Aorta (tissue), 5 donors: ENCODE measurements at regions of chr10 and their contacts with region 1.

Region 1: GRCh38 chr10:93702211-93703001 is at the start of gene FRA10AC1:
- DNase-seq: peak; percentile 94 to 97
- ATAC-seq: peak; percentile 99
- H3K4me3 ChIP-seq: peak within 1 kb of the TSS; percentile 50 to 94
- H3K27ac ChIP-seq: peak within 1 kb of the TSS; percentile 37 to 84
- H3K4me1 ChIP-seq: peaks cover 0 to 2% of the 10 kb centered on the region in 2 donors
- H3K27me3 ChIP-seq: no peaks in the 10 kb centered on the region
- total RNA-seq, gene FRA10AC1: 24.8 to 32.5 TPM

Region 2: DNA sequence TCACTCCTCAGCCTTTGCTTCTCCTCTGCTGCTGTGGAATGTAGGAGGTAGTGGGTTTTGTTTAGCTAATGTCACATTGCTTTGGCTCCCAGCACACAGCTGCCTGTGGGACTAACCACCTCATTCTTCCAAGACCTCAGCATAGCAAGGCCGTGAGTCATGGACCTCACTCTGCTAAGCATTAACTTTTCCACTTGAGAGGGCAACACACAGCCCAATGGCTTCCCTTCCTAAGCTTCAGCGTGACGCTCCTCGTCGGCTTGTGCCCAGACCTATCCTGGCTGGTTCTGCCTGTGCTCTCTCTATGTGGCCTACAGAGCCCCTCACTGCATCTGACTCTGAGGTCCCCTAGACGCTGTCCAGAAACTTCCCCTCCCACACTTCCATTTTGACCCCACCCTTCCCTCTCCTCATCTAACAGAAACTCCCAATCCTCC is 243.6 kb before region 1 on chr10:
- intact Hi-C with region 1: no loop called
- DNase-seq: peak; percentile 91 to 92
- ATAC-seq: peak; percentile 92
- H3K4me3 ChIP-seq: no peak overlapping the region
- H3K27ac ChIP-seq: peak overlapping the region; percentile 87 to 96
- H3K4me1 ChIP-seq: peaks cover 0 to 6% of the 10 kb centered on the region in 2 donors
- H3K27me3 ChIP-seq: no peaks in the 10 kb centered on the region

Region 3: DNA sequence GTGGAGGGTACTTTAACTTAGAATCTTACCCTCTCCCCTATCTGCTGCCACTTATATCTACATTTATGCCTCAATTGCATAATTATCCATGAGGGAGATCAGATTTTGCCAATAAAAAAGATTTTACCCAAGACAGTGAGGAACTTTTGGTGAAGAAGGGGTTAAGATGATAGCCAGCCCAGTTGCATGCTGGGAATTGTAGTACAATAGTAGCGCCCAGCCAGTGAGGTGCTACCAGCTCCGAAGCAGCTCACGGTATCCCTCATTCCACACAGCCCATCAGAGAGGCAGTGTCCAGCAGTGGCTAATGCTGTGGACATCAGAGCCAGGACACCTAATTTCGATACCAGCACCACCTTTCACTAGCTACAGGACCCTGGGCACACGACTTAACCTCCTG is 49.4 kb after region 1 on chr10:
- intact Hi-C with region 1: loop called (anchors 5 kb)
- DNase-seq: no peak
- ATAC-seq: no peak
- H3K4me3 ChIP-seq: no peak overlapping the region
- H3K27ac ChIP-seq: no peak overlapping the region
- H3K4me1 ChIP-seq: peaks cover 0 to 2% of the 10 kb centered on the region in 2 donors
- H3K27me3 ChIP-seq: no peaks in the 10 kb centered on the region

Region 4: DNA sequence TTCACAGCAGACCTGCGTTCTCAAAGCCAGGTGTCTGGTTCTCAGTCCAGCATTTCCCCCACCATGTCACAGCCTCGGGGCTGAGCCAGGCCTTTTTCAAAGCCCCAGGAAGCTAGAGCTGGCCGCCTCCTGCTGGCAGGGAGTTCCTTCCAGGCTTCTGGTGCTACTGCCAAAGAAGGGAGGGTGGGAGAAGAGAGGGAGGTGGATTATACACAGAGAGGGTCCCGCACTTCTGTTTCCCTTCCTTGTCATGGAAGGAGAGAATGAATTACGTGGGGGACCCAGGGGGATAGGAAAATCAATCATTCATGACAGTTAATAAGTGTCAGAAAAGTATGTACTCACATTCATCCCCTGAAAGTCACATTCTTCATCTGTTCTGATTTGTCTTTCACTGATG is 54.7 kb after region 1 on chr10:
- intact Hi-C with region 1: loop called (anchors 5 kb)
- DNase-seq: peak in 1 of 2 donors; percentile 51
- ATAC-seq: peak; percentile 62
- H3K4me3 ChIP-seq: peak overlapping the region; percentile 55 to 96
- H3K27ac ChIP-seq: no peak overlapping the region
- H3K4me1 ChIP-seq: peaks cover 4 to 5% of the 10 kb centered on the region in 2 donors
- H3K27me3 ChIP-seq: no peaks in the 10 kb centered on the region

Region 5: DNA sequence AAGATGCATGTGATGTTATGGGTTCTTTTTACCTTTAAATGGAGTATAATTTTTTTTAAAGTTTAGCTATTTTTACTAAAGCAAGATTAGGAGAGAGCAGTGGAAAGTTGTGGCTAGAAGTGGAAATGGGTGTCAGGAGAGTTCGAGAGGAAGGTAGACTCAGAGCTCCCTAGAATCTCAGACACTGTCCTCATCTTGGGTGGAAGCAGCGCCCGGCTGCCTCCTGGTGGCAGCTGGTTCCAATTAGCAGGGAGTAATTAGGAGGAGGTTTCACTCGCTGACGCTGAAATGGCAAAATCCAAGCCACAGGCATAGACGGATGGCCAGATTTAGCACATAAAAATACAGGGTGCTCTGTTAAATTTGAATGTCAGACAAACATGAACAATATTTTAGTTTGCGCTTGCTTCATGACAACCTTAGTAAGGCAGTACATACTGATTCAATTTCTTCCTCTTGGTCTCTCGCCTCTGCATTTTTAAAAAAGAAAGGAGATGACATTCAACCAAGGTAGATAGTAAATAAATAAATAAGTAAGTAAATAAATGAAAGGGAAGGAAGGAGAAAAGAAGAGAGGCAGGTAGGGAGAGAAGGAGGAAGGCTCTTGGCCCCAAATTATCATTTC is 113.8 kb after region 1 on chr10:
- intact Hi-C with region 1: loop called (anchors 1 to 2 kb)
- DNase-seq: peak; percentile 72 to 89
- ATAC-seq: peak; percentile 88
- H3K4me3 ChIP-seq: no peak overlapping the region
- H3K27ac ChIP-seq: no peak overlapping the region
- H3K4me1 ChIP-seq: no peaks in the 10 kb centered on the region
- H3K27me3 ChIP-seq: no peaks in the 10 kb centered on the region